Heart right ventricle (tissue), 16 donors: ENCODE measurements at regions of chr9 and their contacts with region 1.

Region 1: GRCh38 chr9:114914139-114914538 is 16.3 kb downstream of the TNFSF8 start:
- DNase-seq: no peak
- ATAC-seq: no peak
- H3K4me3 ChIP-seq: no peak overlapping the region
- H3K27ac ChIP-seq: no peak overlapping the region
- H3K4me1 ChIP-seq: peaks cover 0 to 11% (median 0%) of the 10 kb centered on the region in 9 donors
- H3K27me3 ChIP-seq: peaks cover 0 to 21% (median 5%) of the 10 kb centered on the region in 7 donors
- CTCF ChIP-seq: peak in 2 of 9 donors; percentile 12 to 24

Region 2: DNA sequence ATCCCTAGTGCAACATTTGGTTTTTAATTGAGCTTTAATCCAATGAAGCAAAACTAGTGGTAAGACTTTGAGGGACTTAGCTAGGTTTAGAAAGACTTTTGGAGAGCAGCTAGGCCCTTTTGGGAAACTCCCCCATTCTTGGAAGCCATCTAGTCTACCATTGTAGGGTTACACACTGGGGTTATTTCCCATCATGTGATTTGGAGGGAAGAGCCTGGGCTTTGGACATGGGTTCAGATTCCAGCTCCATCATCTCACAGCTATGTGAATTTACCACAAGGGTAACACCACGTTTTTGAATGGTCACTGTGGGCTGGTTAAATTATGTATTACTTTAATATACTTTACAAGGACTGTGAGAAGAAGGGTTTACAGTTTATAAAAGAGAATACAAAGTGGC is 90.0 kb before region 1 on chr9:
- intact Hi-C with region 1: no loop called
- DNase-seq: no peak
- ATAC-seq: no peak
- H3K4me3 ChIP-seq: no peak overlapping the region
- H3K27ac ChIP-seq: no peak overlapping the region
- H3K4me1 ChIP-seq: no peaks in the 10 kb centered on the region
- H3K27me3 ChIP-seq: peaks cover 0 to under 1% (median 0%) of the 10 kb centered on the region in 7 donors
- CTCF ChIP-seq: no peak

Region 3: GRCh38 chr9:114945616-114946412 is 31.7 kb after region 1 on chr9:
- intact Hi-C with region 1: loop called in 1 of 10 experiments (anchors 2 kb)
- DNase-seq: no peak
- ATAC-seq: peak in 2 of 8 donors; percentile 60 to 66
- H3K4me3 ChIP-seq: no peak overlapping the region
- H3K27ac ChIP-seq: peak overlapping the region in 1 of 10 donors; percentile 64
- H3K4me1 ChIP-seq: peaks cover 0 to 13% (median 0%) of the 10 kb centered on the region in 9 donors
- H3K27me3 ChIP-seq: peaks cover 0 to 4% (median 0%) of the 10 kb centered on the region in 7 donors
- CTCF ChIP-seq: no peak